Posterior cingulate gyrus (tissue), 11 donors: ENCODE measurements at regions of chr11 and their contacts with region 1.

Region 1: GRCh38 chr11:122578168-122578825 is 77.2 kb upstream of the UBASH3B start:
- DNase-seq: no peak

Region 2: DNA sequence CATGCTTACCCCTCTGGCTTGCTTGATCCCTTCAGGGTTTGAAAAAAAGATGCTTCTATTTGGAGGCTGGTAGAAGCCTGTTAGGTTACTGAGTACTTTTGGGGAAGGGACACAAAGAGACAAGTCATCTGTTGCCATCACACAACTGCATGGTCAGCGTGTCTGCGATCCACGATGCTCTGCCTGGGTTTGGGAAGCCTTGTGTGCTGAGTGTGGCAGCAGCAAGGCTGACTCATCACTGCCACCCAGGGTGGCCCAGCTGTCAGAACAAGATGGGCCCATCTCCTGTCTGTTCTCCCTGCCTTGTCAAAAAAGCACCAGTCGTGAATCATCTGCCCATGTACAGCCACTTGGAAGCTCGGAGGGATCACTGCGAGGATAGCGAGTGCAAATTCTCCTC is 103.4 kb after region 1 on chr11:
- intact Hi-C with region 1: no loop called
- DNase-seq: peak in 6 of 10 donors; percentile 25 to 92 (median 64)

Region 3: DNA sequence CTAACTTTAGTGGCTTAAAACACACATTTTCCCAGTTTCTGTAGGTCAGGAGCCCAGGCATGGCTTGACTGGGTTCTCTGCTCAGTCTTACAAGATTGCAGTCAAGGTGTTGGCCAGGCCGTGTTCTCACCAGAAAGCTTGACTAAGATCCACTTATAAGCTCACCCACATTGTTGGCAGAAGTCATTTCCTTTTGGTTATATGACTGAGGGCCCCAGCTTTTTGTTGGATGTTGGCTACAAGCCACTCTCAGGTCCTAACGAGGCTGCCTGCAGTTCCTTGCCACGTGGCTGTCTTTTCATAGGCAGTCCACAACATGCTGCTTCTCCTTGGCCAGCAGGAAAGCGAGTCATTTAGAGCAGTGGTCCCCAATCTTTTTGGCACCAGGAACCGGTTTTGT is 180.7 kb after region 1 on chr11:
- intact Hi-C with region 1: no loop called
- DNase-seq: no peak

Region 4: DNA sequence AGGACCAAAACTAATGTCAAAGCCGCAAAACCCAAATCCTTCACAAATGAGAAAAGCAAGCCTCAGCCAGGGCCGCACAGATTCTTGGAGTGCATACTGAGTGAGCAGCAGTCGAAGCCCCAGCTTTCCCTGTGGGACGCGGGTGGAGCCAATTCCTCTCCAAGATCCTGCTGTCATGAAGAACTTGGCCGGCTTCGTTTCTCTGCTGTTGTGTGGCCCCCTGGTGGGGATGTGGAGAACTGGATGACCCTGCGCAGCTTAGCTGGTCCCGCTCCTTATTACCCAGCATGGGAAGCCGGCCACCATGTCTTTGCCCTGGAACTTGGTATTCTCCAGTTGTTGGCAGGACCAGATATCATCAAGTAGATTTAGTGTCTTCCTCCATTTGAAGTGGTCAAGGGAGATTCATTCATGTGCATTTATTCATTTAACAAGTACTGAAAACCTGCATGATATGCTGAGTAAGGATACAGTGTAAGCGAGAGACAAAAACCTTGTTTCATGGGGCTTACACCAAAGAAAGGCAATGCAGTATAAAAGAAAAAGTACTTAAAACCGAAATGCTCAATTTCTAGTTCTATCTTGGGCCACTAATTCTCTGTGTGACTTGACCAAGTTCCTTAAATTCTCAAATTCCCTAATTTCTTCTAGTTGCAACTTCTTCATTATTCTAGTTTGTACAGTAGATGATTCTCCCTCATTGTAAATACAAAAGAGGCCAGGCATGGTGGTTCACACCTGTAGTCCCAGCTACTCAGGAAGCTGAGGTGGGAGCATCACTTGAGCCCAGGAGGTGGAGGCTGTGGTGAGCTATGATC is 203.3 kb after region 1 on chr11:
- intact Hi-C with region 1: loop called (anchors 2 kb)
- DNase-seq: peak; percentile 73 to 98 (median 89)

Region 5: GRCh38 chr11:122853971-122854446 is 275.7 kb after region 1 on chr11:
- intact Hi-C with region 1: loop called (anchors 2 kb)
- DNase-seq: peak in 2 of 10 donors; percentile 23 to 26